K562 (cell line): ENCODE measurements at regions of chr21 and their contacts with region 1.

Region 1: DNA sequence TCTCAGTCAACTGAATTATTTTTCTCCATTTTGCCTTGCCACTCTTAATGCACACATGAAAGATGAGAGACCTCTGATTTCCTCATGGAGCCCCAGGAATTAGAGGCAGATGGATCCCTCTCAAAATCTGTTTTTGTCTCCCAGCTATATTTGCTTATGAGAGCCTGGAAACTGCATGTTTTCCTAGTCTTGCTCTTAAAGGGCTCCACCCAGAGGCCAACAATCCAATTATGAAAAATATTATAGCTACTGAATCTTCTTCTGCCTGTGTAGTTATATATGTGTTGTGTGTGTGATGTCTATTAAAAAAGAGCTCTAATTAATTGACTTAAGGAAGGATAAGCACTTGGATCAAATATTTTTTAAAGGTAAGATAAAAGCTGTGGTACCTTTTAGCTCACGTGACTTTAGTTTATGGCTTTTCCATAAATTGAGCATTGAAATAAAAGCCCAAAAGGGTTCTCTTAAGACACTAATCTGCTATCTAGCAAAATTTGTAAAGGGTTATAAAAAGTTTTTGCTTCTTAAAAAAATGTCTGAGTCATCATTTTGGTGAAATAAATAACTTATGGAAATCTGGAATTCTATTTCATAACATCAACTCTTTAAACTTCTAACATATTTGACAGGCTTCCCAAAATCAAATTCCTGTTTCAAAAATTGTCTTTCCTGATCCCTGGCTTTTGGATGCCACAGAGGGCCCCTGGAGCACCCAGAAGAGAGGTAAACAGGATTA is 31.2 kb upstream of the TSPEAR start:
- DNase-seq: peak in 1 of 4 experiments; percentile 41
- ATAC-seq: 0 out of 3 replicates have a peak, but pooled peaks have one; percentile 50
- H3K4me3 ChIP-seq: no peak overlapping the region
- H3K27ac ChIP-seq: no peak overlapping the region
- H3K4me1 ChIP-seq: no peaks in the 10 kb centered on the region
- H3K27me3 ChIP-seq: peaks cover 26 to 31% of the 10 kb centered on the region in 2 experiments
- CTCF ChIP-seq: peak; percentile 29 to 67 (median 35); a peak in 4 of 6 replicates
- EP300 ChIP-seq: no peak
- POLR2A ChIP-seq: no peak
- RAD21 ChIP-seq: peak; percentile 64 to 79

Region 2: DNA sequence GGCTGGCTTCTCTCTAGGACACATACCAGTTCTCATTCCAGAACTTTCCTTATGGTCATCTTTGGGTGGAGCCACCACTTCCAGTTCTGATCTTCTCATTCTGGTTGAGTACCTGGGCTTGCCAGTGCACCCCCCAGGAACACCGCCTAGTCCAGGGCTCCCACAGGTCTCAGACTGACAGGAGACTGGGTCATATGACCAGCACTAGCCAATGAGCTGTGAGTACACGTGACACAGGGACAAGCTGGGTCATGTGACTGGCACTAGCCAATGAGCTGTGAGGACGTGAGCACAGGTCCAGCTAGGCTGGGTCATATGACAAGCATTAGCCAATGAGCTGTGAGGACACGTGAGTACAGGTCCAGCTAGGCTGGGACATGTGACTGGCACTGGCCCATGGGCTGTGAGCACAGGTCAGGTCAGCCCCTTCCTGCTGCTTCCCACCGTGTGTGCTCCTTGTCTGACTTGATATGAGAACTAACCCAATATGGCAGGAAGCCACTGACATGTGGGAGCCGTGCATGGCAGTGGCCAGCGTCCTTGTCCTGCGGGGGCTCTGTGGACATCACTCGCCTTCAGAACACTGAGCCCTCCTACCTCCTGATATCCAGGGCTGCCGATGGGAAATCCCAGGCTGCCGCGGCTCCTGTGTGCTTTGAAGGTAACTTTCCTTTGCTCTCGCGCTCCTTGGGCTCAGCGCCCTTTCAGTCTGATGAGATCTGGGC is 225.2 kb before region 1 on chr21:
- CTCF ChIA-PET with region 1: no interaction called
- POLR2A ChIA-PET with region 1: interaction called, 3 read pairs
- in situ Hi-C with region 1: loop called (anchors 5 kb)
- intact Hi-C with region 1: no loop called
- DNase-seq: peak; percentile 89 to 96 (median 92)
- ATAC-seq: peak; percentile 98
- H3K4me3 ChIP-seq: peak overlapping the region; percentile 35
- H3K27ac ChIP-seq: peak overlapping the region; percentile 19; the same call in 2 of the 3 replicates
- H3K4me1 ChIP-seq: peaks cover 0 to 36% of the 10 kb centered on the region in 2 experiments; a peak in 3 of 5 replicates
- H3K27me3 ChIP-seq: peaks cover 0 to 23% of the 10 kb centered on the region in 2 experiments; a peak in 1 of 5 replicates
- CTCF ChIP-seq: no peak
- EP300 ChIP-seq: no peak
- POLR2A ChIP-seq: peak; percentile 60; the same call in 1 of the 2 replicates
- RAD21 ChIP-seq: no peak

Region 3: DNA sequence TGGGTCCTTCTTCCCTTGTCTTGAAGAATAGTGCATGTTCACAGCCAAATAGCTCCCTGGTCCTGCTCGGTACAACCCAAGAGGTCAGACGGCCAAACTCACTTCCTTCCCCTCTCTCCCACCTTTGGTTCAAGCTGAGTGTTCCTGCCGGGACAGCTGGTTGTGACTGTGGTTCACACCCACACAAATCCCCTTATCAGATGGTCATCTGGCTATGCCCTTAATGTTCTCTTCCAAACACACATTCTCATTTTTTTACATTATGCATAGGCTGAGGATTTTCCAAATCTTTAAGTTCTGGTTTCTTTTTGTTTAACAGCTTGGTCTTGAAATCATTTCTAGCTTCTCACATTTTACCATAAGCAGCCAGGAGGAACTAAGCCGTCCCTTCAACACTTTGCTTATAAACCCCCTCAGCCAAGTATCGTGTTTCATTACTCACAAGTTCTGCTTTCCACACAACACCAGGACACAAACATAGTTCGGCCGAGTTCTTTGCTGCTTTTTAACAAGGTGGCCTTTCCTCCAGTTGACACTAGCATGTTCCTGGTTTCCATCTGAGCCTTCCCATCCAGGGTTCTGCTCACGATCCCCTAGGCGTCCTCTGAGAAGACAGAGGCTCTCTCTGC is 11.5 kb before region 1 on chr21:
- CTCF ChIA-PET with region 1: no interaction called
- POLR2A ChIA-PET with region 1: interaction called, 10 read pairs
- in situ Hi-C with region 1: no loop called
- intact Hi-C with region 1: no loop called
- DNase-seq: peak; percentile 32 to 56 (median 45)
- ATAC-seq: no peak; the same call in 2 of the 3 replicates
- H3K4me3 ChIP-seq: no peak overlapping the region
- H3K27ac ChIP-seq: no peak overlapping the region
- H3K4me1 ChIP-seq: peaks cover 10 to 20% of the 10 kb centered on the region in 2 experiments; a peak in 4 of 5 replicates
- H3K27me3 ChIP-seq: peaks cover 77 to 91% of the 10 kb centered on the region in 2 experiments
- CTCF ChIP-seq: no peak
- EP300 ChIP-seq: no peak
- POLR2A ChIP-seq: no peak
- RAD21 ChIP-seq: no peak